ENCODE measurements at regions of chr9 and their contacts with region 1.

Region 1: GRCh38 chr9:75866273-75866871 is 24.1 kb upstream of the PCSK5 start:
- DNase-seq: peak in 1 of 2 donors; percentile 63
- H3K4me3 ChIP-seq: no peak overlapping the region
- H3K27ac ChIP-seq: no peak overlapping the region
- H3K4me1 ChIP-seq: no peaks in the 10 kb centered on the region
- H3K27me3 ChIP-seq: no peaks in the 10 kb centered on the region
- CTCF ChIP-seq: peak; percentile 76 to 82

Region 2: DNA sequence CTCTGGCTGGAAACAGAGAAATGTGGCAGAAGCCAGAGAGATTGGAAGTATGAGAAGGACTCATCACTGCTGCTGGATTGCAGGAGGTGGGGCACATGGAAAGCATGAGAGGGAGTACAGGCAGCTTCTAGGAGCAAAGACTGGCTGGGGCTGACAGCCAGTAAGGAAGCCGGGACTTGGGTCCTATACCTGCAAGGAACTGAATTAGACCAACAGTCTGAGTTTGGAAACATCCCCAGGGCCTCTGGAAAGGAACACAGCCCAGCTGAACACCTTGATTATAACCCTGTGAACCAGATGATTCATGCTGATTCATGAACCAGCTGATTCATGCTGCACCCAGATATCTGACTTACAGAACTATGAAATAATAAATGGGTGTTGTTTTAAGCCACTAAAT is 684.6 kb before region 1 on chr9:
- intact Hi-C with region 1: no loop called
- DNase-seq: no peak
- H3K4me3 ChIP-seq: no peak overlapping the region
- H3K27ac ChIP-seq: no peak overlapping the region
- H3K4me1 ChIP-seq: no peaks in the 10 kb centered on the region
- H3K27me3 ChIP-seq: no peaks in the 10 kb centered on the region
- CTCF ChIP-seq: no peak

Region 3: GRCh38 chr9:75265525-75265972 is 600.8 kb before region 1 on chr9:
- intact Hi-C with region 1: loop called (anchors 5 kb)
- DNase-seq: peak in 1 of 2 donors; percentile 51
- H3K4me3 ChIP-seq: no peak overlapping the region
- H3K27ac ChIP-seq: no peak overlapping the region
- H3K4me1 ChIP-seq: peaks cover 0 to 28% (median 0%) of the 10 kb centered on the region in 4 donors
- H3K27me3 ChIP-seq: no peaks in the 10 kb centered on the region
- CTCF ChIP-seq: peak; percentile 87 to 90

Region 4: DNA sequence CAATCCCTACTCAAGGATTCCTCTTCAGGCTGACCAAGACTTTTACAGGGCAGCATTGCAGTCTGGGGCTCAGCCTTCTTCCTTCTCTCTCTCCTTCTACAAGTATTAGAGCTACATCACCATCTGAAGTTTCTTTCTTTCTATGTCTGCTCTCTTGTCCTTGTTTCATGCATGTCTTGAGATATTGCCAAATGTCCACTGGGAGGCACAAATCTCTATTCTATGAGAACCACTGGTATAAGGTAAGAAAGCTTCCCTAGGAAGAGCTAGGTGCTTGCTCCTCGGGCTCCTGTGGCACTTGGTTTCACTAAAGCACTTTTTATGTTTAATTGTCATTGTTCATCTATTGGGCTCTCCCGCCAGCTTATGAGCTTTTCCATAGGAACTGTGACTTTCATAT is 265.1 kb before region 1 on chr9:
- intact Hi-C with region 1: loop called (anchors 10 kb)
- DNase-seq: no peak
- H3K4me3 ChIP-seq: no peak overlapping the region
- H3K27ac ChIP-seq: no peak overlapping the region
- H3K4me1 ChIP-seq: peaks cover 0 to 9% (median 0%) of the 10 kb centered on the region in 4 donors
- H3K27me3 ChIP-seq: no peaks in the 10 kb centered on the region
- CTCF ChIP-seq: no peak

Region 5: GRCh38 chr9:76297721-76298239 is 431.4 kb after region 1 on chr9:
- intact Hi-C with region 1: loop called (anchors 10 kb)
- DNase-seq: peak; percentile 45 to 67
- H3K4me3 ChIP-seq: peak overlapping the region in 1 of 2 donors; percentile 25
- H3K27ac ChIP-seq: peak overlapping the region in 1 of 2 donors; percentile 2
- H3K4me1 ChIP-seq: peaks cover 0 to 14% (median 8%) of the 10 kb centered on the region in 4 donors
- H3K27me3 ChIP-seq: no peaks in the 10 kb centered on the region
- CTCF ChIP-seq: no peak